ENCODE measurements at regions of chr17 and their contacts with region 1.

Region 1: DNA sequence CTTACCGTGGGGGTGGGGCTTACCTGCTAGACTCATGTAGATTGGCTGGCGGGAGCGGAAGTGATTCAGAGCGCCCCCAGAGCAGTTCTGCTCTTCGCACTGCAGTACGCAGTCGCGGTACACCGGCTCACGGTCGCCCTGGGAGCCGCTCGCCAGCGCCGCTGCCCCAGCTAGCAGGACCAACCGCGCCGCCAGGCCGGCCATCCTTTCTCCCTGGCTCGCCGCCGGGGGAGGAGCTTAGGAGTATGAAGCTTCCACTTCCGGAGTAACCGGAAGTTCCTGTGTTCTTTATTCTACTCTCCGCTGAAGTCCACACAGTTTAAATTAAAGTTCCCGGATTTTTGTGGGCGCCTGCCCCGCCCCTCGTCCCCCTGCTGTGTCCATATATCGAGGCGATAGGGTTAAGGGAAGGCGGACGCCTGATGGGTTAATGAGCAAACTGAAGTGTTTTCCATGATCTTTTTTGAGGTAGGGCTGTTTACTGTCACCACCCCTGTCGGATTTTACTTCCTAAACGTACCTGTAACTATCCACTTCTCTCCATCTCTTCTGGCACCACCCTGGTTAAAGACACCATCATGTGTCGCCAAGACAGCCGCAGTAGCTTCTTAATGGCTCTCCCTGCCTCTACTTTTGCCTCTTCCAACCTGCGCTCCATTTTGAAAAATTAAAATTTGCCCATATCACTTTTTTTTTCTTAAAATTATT is at the start of gene PGAP3:
- DNase-seq: peak; percentile 95
- ATAC-seq: peak; percentile 95
- H3K4me3 ChIP-seq: peak within 1 kb of the TSS; percentile 72 to 76 (median 74)
- H3K27ac ChIP-seq: peak within 1 kb of the TSS; percentile 88
- H3K4me1 ChIP-seq: peaks cover 31% of the 10 kb centered on the region
- H3K27me3 ChIP-seq: no peaks in the 10 kb centered on the region; a peak in 1 of 5 replicates
- CTCF ChIP-seq: peak; percentile 65
- EP300 ChIP-seq: peak in 1 of 2 experiments; percentile 46; a peak in 2 of 4 replicates
- POLR2A ChIP-seq: peak; percentile 78 to 86
- RAD21 ChIP-seq: peak; percentile 54; the same call in 1 of the 2 replicates
- total RNA-seq, gene PGAP3: 5.1 and 11.9 TPM in 2 replicates

Region 2: DNA sequence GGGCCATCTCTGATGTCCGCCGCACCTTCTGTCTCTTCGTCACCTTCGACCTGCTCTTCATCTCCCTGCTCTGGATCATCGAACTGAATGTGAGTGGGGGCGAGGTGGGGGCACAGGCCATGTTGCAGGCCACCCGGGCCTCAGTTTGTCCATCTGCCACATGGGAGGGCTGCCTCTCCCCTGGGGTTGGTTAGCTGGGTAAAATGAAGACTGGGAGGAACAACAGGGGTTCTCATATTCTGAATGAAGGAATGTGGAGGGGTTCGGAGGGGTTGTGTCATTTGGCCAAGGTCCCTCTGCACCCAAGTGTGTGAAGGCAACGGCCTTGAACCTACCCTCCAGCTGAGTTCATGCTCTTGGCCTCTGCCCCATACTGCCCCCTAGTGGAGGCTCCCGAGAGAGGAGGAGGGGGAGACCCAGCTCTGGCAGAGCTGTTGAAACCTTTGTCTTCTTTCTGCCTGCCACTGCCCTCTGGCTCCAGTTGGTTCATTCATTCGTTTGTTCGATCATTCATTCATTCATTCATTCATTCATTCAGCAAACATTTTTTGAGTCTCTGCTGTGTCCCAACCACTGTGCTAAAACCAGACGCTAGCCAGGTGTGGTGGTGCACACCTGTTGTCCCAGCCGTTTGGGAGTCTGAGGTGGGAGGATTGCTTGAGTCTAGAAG is 34.2 kb before region 1 on chr17:
- CTCF ChIA-PET with region 1: no interaction called
- POLR2A ChIA-PET with region 1: interaction called, 12 read pairs
- in situ Hi-C with region 1: no loop called
- intact Hi-C with region 1: no loop called
- DNase-seq: peak; percentile 79
- ATAC-seq: peak; percentile 65
- H3K4me3 ChIP-seq: peak overlapping the region in 1 of 3 experiments; percentile 54; a peak in 1 of 6 replicates
- H3K27ac ChIP-seq: peak overlapping the region; percentile 48
- H3K4me1 ChIP-seq: peaks cover 31% of the 10 kb centered on the region
- H3K27me3 ChIP-seq: no peaks in the 10 kb centered on the region
- CTCF ChIP-seq: peak; percentile 93
- EP300 ChIP-seq: peak in 1 of 2 experiments; percentile 53; a peak in 1 of 4 replicates
- POLR2A ChIP-seq: no peak
- RAD21 ChIP-seq: peak; percentile 76

Region 3: DNA sequence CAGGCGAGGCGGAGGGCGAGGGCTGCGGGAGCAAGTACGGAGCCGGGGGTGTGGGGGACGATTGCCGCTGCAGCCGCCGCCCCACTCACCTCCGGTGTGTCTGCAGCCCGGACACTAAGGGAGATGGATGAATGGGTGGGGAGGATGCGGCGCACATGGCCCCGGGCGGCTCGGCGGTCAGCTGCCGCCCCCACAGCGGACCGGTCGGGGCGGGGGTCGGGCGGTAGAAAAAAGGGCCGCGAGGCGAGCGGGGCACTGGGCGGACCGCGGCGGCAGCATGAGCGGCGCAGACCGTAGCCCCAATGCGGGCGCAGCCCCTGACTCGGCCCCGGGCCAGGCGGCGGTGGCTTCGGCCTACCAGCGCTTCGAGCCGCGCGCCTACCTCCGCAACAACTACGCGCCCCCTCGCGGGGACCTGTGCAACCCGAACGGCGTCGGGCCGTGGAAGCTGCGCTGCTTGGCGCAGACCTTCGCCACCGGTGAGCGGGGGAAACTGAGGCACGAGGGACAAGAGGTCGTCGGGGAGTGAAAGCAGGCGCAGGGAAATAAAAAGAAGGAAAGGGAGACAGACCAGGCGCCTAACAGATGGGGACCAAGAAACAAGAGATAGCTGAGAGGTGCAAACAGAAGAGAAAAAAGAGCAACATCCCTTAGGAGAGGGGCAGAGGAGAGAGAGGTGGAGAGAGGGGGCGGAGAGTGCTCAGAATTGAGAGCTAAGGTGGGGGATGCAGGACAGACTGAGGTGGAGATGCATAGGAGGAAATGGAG is 19.6 kb before region 1 on chr17 and contains the start of gene PNMT:
- CTCF ChIA-PET with region 1: no interaction called
- POLR2A ChIA-PET with region 1: interaction called, 25 read pairs
- in situ Hi-C with region 1: no loop called
- intact Hi-C with region 1: no loop called
- DNase-seq: peak; percentile 56
- ATAC-seq: peak; percentile 39
- H3K4me3 ChIP-seq: peak within 1 kb of the TSS; percentile 24 to 66 (median 46); a peak in 5 of 6 replicates
- H3K27ac ChIP-seq: no peak within 1 kb of the TSS
- H3K4me1 ChIP-seq: peaks cover 77% of the 10 kb centered on the region
- H3K27me3 ChIP-seq: peaks cover 11 to 51% of the 10 kb centered on the region in 2 experiments
- CTCF ChIP-seq: peak; percentile 94
- EP300 ChIP-seq: no peak
- POLR2A ChIP-seq: no peak
- RAD21 ChIP-seq: peak; percentile 85
- total RNA-seq, gene PNMT: not detected in 2 replicates

Region 4: GRCh38 chr17:39676198-39676819 is 11.7 kb before region 1 on chr17:
- CTCF ChIA-PET with region 1: no interaction called
- POLR2A ChIA-PET with region 1: interaction called, 63 read pairs
- in situ Hi-C with region 1: no loop called
- intact Hi-C with region 1: no loop called
- DNase-seq: no peak
- ATAC-seq: no peak
- H3K4me3 ChIP-seq: no peak overlapping the region
- H3K27ac ChIP-seq: peak overlapping the region; percentile 41
- H3K4me1 ChIP-seq: peaks cover 81% of the 10 kb centered on the region
- H3K27me3 ChIP-seq: peaks cover 0 to 3% of the 10 kb centered on the region in 2 experiments; a peak in 2 of 5 replicates
- CTCF ChIP-seq: no peak
- EP300 ChIP-seq: no peak
- POLR2A ChIP-seq: no peak
- RAD21 ChIP-seq: no peak

Region 5: DNA sequence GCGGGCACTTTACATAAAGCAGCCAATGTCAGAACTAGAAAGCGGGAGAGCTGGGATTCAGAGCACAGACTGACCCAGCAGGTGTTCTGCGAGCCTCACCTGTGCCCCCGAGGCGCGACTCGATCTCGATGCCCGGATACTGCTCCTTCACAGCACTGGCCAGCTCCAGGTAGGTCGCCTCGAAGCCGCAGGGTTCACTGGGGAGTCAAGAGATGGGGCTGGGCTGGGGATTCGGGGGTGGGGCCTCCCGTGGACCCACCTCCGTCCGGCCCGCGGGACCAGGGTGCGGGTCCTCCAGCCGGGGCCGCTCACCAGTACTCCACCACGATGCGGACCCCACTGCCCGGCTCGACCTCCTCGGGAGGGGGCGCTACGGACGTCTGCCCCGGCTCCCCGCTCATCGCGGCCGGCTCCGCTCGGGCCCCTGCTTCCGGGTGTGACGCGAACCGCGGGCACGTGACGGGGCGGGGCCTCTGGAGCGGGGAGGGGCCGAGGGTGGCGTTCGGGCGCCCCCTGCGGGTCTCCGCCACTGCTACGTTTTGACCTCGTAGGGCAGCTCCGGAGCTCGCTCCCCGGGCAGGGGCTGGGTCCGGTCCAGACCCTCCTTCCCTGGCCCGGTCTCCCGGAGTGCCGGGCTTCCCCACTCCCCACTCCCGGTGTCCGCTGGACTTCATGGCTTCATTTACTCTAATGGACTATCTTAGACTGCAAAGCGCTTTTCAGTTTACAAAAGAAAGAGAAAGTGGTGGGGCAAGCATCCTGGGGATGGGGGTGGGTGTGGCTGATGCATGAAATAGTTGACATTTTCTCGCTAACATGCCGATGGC is 42.3 kb after region 1 on chr17 and contains the start of gene MIEN1:
- CTCF ChIA-PET with region 1: no interaction called
- POLR2A ChIA-PET with region 1: interaction called, 35 read pairs
- in situ Hi-C with region 1: no loop called
- intact Hi-C with region 1: no loop called
- DNase-seq: peak; percentile 78
- ATAC-seq: peak; percentile 89
- H3K4me3 ChIP-seq: peak within 1 kb of the TSS; percentile 68 to 81 (median 74)
- H3K27ac ChIP-seq: peak within 1 kb of the TSS; percentile 65
- H3K4me1 ChIP-seq: peaks cover 21% of the 10 kb centered on the region
- H3K27me3 ChIP-seq: no peaks in the 10 kb centered on the region
- CTCF ChIP-seq: peak; percentile 93
- EP300 ChIP-seq: 0 out of 4 replicates have a peak, but pooled peaks have one; percentile 3 to 49
- POLR2A ChIP-seq: peak; percentile 56 to 84
- RAD21 ChIP-seq: peak; percentile 97
- total RNA-seq, gene MIEN1: 40.6 and 48.6 TPM in 2 replicates

Region 6: GRCh38 chr17:39738931-39739884 is 51.2 kb after region 1 on chr17:
- CTCF ChIA-PET with region 1: no interaction called
- POLR2A ChIA-PET with region 1: interaction called, 44 read pairs
- in situ Hi-C with region 1: no loop called
- intact Hi-C with region 1: no loop called
- DNase-seq: peak; percentile 100
- ATAC-seq: peak; percentile 69
- H3K4me3 ChIP-seq: peak overlapping the region; percentile 89 to 96 (median 95)
- H3K27ac ChIP-seq: peak overlapping the region; percentile 97
- H3K4me1 ChIP-seq: peaks cover 44% of the 10 kb centered on the region
- H3K27me3 ChIP-seq: no peaks in the 10 kb centered on the region; a peak in 1 of 5 replicates
- CTCF ChIP-seq: peak; percentile 40
- EP300 ChIP-seq: peak in 1 of 2 experiments; percentile 76; a peak in 2 of 4 replicates
- POLR2A ChIP-seq: peak; percentile 72 to 79
- RAD21 ChIP-seq: peak; percentile 44

Measured in HepG2 (cell line).